CD4-positive, alpha-beta T cell (primary cell): ENCODE measurements at regions of chr10 and their contacts with region 1.

Region 1: GRCh38 chr10:31031558-31032257 is at the start of gene ZNF438:
- DNase-seq: peak; percentile 89 to 98 (median 94)
- ATAC-seq: peak; percentile 77
- H3K4me3 ChIP-seq: peak within 1 kb of the TSS; percentile 74
- H3K4me3 Mint-ChIP-seq: peak within 1 kb of the TSS; percentile 95
- H3K27ac ChIP-seq: peak within 1 kb of the TSS; percentile 91 to 99
- H3K27ac Mint-ChIP-seq: peak within 1 kb of the TSS; percentile 100
- H3K4me1 ChIP-seq: peaks cover 22% of the 10 kb centered on the region
- H3K4me1 Mint-ChIP-seq: peaks cover 18% of the 10 kb centered on the region
- H3K27me3 ChIP-seq: no peaks in the 10 kb centered on the region
- H3K27me3 Mint-ChIP-seq: no peaks in the 10 kb centered on the region
- CTCF ChIP-seq: peak; percentile 74
- total RNA-seq, gene ZNF438: 1.9 to 2.0 TPM

Region 2: DNA sequence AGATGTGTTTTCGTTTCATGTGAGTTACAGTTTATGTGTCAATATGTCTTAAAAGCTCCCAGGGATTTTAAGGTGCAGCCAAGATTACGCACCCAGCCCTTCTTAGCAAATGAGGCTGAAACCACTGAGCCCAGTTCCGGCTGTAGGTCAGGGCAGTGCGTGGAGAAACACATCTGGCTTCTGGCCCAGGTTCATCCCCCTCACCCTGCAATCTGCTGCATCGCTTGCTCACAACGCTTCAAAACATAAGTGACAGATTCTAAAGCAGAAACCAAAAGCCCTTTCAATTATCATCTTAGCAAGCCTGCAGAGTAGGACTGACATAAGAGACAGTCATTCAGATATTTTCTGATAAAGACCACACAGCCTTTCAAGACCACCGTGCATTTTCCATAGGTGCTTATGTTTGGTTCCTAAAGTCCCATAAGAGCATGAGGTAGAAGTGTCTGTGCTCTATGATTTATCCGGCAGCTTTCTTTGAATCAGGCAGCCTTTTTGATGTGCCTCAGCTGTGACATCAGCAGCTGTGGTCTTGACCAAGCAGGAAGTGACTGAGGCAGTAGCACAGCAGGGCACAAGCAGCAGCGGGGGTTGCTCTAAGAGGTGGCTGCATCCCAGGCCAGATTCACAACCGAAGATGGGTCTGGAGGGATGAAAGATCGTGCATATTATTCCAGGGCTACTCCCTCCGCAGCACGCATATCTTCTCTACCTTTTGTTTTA is 330.1 kb before region 1 on chr10:
- CTCF ChIA-PET with region 1: no interaction called
- POLR2A ChIA-PET with region 1: interaction called, 4 read pairs
- intact Hi-C with region 1: loop called (anchors 5 to 10 kb)
- DNase-seq: peak; percentile 41 to 87 (median 62)
- ATAC-seq: peak; percentile 65
- H3K4me3 ChIP-seq: peak overlapping the region; percentile 43
- H3K4me3 Mint-ChIP-seq: peak overlapping the region; percentile 85
- H3K27ac ChIP-seq: peak overlapping the region; percentile 51 to 74
- H3K27ac Mint-ChIP-seq: peak overlapping the region; percentile 99
- H3K4me1 ChIP-seq: peaks cover 81% of the 10 kb centered on the region
- H3K4me1 Mint-ChIP-seq: peaks cover 87% of the 10 kb centered on the region
- H3K27me3 ChIP-seq: no peaks in the 10 kb centered on the region
- H3K27me3 Mint-ChIP-seq: no peaks in the 10 kb centered on the region
- CTCF ChIP-seq: no peak

Region 3: GRCh38 chr10:30999070-30999712 is 32.5 kb before region 1 on chr10:
- CTCF ChIA-PET with region 1: interaction called, 3 read pairs
- POLR2A ChIA-PET with region 1: interaction called, 15 read pairs
- intact Hi-C with region 1: no loop called
- DNase-seq: peak in 3 of 14 experiments; percentile 23 to 73 (median 64)
- ATAC-seq: peak; percentile 34
- H3K4me3 ChIP-seq: peak overlapping the region; percentile 48
- H3K4me3 Mint-ChIP-seq: peak overlapping the region; percentile 79
- H3K27ac ChIP-seq: peak overlapping the region in 1 of 2 donors; percentile 50
- H3K27ac Mint-ChIP-seq: peak overlapping the region; percentile 83
- H3K4me1 ChIP-seq: peaks cover 4% of the 10 kb centered on the region
- H3K4me1 Mint-ChIP-seq: peaks cover 46% of the 10 kb centered on the region
- H3K27me3 ChIP-seq: no peaks in the 10 kb centered on the region
- H3K27me3 Mint-ChIP-seq: no peaks in the 10 kb centered on the region
- CTCF ChIP-seq: no peak

Region 4: GRCh38 chr10:31133628-31134302 is 102.1 kb after region 1 on chr10:
- CTCF ChIA-PET with region 1: no interaction called
- POLR2A ChIA-PET with region 1: interaction called, 16 read pairs
- intact Hi-C with region 1: loop called in 1 of 2 experiments (anchors 2 kb)
- DNase-seq: peak; percentile 45 to 85 (median 66)
- ATAC-seq: peak; percentile 63
- H3K4me3 ChIP-seq: peak overlapping the region; percentile 83
- H3K4me3 Mint-ChIP-seq: peak overlapping the region; percentile 84
- H3K27ac ChIP-seq: peak overlapping the region in 1 of 2 donors; percentile 45
- H3K27ac Mint-ChIP-seq: peak overlapping the region; percentile 86
- H3K4me1 ChIP-seq: peaks cover 41% of the 10 kb centered on the region
- H3K4me1 Mint-ChIP-seq: peaks cover 50% of the 10 kb centered on the region
- H3K27me3 ChIP-seq: no peaks in the 10 kb centered on the region
- H3K27me3 Mint-ChIP-seq: no peaks in the 10 kb centered on the region
- CTCF ChIP-seq: no peak

Region 5: DNA sequence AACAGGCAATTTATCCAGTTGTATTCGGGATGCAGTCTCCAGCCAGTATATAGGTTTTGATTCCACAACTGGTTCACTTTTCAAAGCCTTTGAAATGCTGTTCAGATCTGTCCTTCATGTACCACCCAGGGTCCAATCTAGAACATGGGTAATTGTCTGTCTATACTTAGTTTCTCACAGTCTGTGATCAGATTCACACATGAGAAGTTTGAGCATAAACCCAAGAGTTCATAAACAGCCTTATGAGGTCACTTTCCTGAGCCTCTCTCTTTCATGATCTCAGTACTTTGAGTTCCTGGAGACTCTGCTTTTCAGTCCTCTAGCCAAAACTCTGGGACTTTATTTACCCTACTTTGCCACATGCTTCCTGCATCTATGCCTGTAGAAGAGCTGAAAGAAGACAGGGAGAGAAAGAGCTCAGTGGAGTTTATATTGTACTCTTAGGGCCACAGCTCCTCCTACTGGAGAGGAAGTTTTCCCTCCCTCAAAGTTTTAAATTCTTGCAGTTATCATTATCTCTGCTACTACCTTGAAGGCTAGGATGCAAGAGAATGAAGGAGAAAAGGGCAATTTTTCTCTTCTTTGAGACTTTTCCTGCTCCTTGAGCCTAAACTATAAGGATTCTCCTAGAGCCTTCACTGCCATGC is 459.3 kb after region 1 on chr10:
- CTCF ChIA-PET with region 1: no interaction called
- POLR2A ChIA-PET with region 1: no interaction called
- intact Hi-C with region 1: loop called in 1 of 2 experiments (anchors 5 kb)
- DNase-seq: peak in 4 of 14 experiments; percentile 16 to 59 (median 52)
- ATAC-seq: peak; percentile 49
- H3K4me3 ChIP-seq: no peak overlapping the region
- H3K4me3 Mint-ChIP-seq: no peak overlapping the region
- H3K27ac ChIP-seq: no peak overlapping the region
- H3K27ac Mint-ChIP-seq: no peak overlapping the region
- H3K4me1 ChIP-seq: no peaks in the 10 kb centered on the region
- H3K4me1 Mint-ChIP-seq: peaks cover 12% of the 10 kb centered on the region
- H3K27me3 ChIP-seq: no peaks in the 10 kb centered on the region
- H3K27me3 Mint-ChIP-seq: no peaks in the 10 kb centered on the region
- CTCF ChIP-seq: peak; percentile 52

Region 6: DNA sequence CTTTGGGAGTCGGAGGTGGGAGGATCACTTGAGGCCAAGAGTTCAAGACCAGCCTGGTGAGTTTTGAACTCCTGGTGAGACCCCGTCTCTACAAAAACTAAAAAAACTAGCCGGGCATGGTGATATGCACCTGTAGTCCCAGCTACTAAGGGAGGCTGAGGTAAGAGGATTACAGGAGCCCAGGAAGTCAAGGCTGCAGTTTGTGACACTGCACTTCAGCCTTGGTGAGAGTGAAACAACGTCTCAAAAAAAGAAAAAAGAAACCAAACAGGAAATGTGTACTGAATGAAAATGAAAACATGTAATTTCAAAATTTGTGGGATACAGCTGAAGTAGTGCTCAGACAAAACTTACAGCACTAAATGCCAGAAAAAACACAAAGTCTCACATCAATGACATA is 889.3 kb after region 1 on chr10:
- CTCF ChIA-PET with region 1: no interaction called
- POLR2A ChIA-PET with region 1: no interaction called
- intact Hi-C with region 1: loop called in 1 of 2 experiments (anchors 5 kb)
- DNase-seq: peak in 1 of 14 experiments; percentile 14
- ATAC-seq: no peak
- H3K4me3 ChIP-seq: no peak overlapping the region
- H3K4me3 Mint-ChIP-seq: peak overlapping the region; percentile 70
- H3K27ac ChIP-seq: no peak overlapping the region
- H3K27ac Mint-ChIP-seq: peak overlapping the region; percentile 82
- H3K4me1 ChIP-seq: peaks cover 18% of the 10 kb centered on the region
- H3K4me1 Mint-ChIP-seq: peaks cover 84% of the 10 kb centered on the region
- H3K27me3 ChIP-seq: no peaks in the 10 kb centered on the region
- H3K27me3 Mint-ChIP-seq: no peaks in the 10 kb centered on the region
- CTCF ChIP-seq: no peak

Region 7: GRCh38 chr10:32445740-32446535 is 1414.2 kb after region 1 on chr10 and contains the start of gene CCDC7:
- CTCF ChIA-PET with region 1: no interaction called
- POLR2A ChIA-PET with region 1: interaction called, 3 read pairs
- intact Hi-C with region 1: loop called in 1 of 2 experiments (anchors 5 kb)
- DNase-seq: peak; percentile 74 to 96 (median 82)
- ATAC-seq: peak; percentile 95
- H3K4me3 ChIP-seq: peak within 1 kb of the TSS; percentile 96
- H3K4me3 Mint-ChIP-seq: peak within 1 kb of the TSS; percentile 94
- H3K27ac ChIP-seq: peak within 1 kb of the TSS; percentile 92 to 95
- H3K27ac Mint-ChIP-seq: peak within 1 kb of the TSS; percentile 97
- H3K4me1 ChIP-seq: peaks cover 8% of the 10 kb centered on the region
- H3K4me1 Mint-ChIP-seq: peaks cover 33% of the 10 kb centered on the region
- H3K27me3 ChIP-seq: no peaks in the 10 kb centered on the region
- H3K27me3 Mint-ChIP-seq: no peaks in the 10 kb centered on the region
- CTCF ChIP-seq: peak; percentile 64
- total RNA-seq, gene CCDC7: 69.4 to 72.9 TPM

Region 8: DNA sequence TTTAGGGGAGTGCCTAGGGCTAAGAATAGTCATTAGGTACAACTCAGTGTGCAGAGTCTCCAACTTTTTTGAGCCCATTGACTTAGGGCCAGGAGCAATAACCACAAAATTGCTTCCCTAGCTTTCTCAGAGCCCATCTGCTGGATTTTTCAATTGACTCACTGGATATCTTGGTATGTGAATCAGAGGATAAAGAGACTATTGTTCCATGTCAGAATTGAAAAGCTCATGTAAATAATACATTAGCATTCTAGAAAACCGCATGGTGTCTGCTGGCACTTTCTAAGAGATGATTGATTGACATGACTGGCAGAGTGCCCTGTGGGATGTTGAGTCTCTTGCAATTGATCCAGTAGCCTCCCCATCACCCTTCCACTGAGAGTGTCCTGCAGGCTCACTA is 1660.5 kb after region 1 on chr10:
- CTCF ChIA-PET with region 1: no interaction called
- POLR2A ChIA-PET with region 1: no interaction called
- intact Hi-C with region 1: no loop called
- DNase-seq: no peak
- ATAC-seq: no peak
- H3K4me3 ChIP-seq: no peak overlapping the region
- H3K4me3 Mint-ChIP-seq: no peak overlapping the region
- H3K27ac ChIP-seq: no peak overlapping the region
- H3K27ac Mint-ChIP-seq: no peak overlapping the region
- H3K4me1 ChIP-seq: no peaks in the 10 kb centered on the region
- H3K4me1 Mint-ChIP-seq: no peaks in the 10 kb centered on the region
- H3K27me3 ChIP-seq: no peaks in the 10 kb centered on the region
- H3K27me3 Mint-ChIP-seq: no peaks in the 10 kb centered on the region
- CTCF ChIP-seq: no peak